ENCODE measurements at regions of chr10 and their contacts with region 1.

Region 1: GRCh38 chr10:95841661-95842498 is 65.9 kb upstream of the CC2D2B start:
- DNase-seq: peak; percentile 9
- H3K4me3 ChIP-seq: no peak overlapping the region
- CTCF ChIP-seq: peak; percentile 45

Region 2: GRCh38 chr10:95552679-95553342 is 289.1 kb before region 1 on chr10:
- CTCF ChIA-PET with region 1: no interaction called
- POLR2A ChIA-PET with region 1: no interaction called
- DNase-seq: no peak
- H3K4me3 ChIP-seq: no peak overlapping the region
- CTCF ChIP-seq: no peak

Region 3: GRCh38 chr10:95688648-95689047 is 153.2 kb before region 1 on chr10:
- CTCF ChIA-PET with region 1: interaction called, 495 read pairs
- POLR2A ChIA-PET with region 1: interaction called, 4 read pairs
- DNase-seq: no peak
- H3K4me3 ChIP-seq: no peak overlapping the region
- CTCF ChIP-seq: no peak

Region 4: GRCh38 chr10:95706986-95707385 is 134.9 kb before region 1 on chr10:
- CTCF ChIA-PET with region 1: interaction called, 19 read pairs
- POLR2A ChIA-PET with region 1: no interaction called
- DNase-seq: no peak
- H3K4me3 ChIP-seq: no peak overlapping the region
- CTCF ChIP-seq: no peak

Region 5: GRCh38 chr10:95770084-95770720 is 71.7 kb before region 1 on chr10:
- CTCF ChIA-PET with region 1: no interaction called
- POLR2A ChIA-PET with region 1: no interaction called
- DNase-seq: no peak
- H3K4me3 ChIP-seq: no peak overlapping the region
- CTCF ChIP-seq: no peak

Region 6: DNA sequence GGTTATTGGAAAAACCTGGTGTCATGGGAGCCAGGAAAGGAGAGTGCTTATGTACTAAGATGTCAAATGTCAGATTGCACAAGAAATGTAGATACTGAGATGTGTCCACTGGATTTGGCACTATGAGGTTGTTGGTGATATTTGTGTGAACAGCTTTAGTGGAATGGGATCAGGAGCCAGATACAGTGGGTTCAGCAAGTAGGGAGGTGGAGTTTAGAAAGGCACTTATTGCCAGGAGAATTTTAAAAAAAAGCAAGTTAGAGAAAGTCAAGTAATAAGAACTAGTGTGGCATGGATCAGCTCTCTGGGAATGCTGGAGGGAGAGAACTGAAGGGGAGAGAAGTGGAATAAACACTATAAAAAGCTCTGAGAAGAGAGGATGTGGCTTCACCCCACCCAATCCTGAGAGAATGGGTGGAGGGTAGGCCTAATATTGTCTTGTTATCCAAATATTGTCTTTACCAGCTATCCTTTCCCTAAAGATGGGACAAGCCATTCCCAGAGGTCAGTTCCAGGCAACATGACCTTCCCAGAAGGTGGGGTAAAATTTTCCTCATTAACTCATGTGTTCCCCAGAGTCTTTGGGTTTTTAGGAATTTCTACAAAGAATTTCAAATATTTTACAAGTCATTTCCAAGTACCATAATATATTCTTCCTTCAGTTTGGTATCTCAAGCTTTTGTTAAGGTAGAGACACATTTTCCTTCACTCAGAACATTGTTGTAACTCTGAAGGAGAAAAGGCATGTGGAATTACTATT is 43.6 kb before region 1 on chr10:
- CTCF ChIA-PET with region 1: interaction called, 11 read pairs
- POLR2A ChIA-PET with region 1: no interaction called
- DNase-seq: no peak
- H3K4me3 ChIP-seq: no peak overlapping the region
- CTCF ChIP-seq: no peak

Region 7: GRCh38 chr10:95818668-95819067 is 23.2 kb before region 1 on chr10:
- CTCF ChIA-PET with region 1: interaction called, 27 read pairs
- POLR2A ChIA-PET with region 1: no interaction called
- DNase-seq: peak; percentile 55
- H3K4me3 ChIP-seq: no peak overlapping the region
- CTCF ChIP-seq: no peak

Region 8: DNA sequence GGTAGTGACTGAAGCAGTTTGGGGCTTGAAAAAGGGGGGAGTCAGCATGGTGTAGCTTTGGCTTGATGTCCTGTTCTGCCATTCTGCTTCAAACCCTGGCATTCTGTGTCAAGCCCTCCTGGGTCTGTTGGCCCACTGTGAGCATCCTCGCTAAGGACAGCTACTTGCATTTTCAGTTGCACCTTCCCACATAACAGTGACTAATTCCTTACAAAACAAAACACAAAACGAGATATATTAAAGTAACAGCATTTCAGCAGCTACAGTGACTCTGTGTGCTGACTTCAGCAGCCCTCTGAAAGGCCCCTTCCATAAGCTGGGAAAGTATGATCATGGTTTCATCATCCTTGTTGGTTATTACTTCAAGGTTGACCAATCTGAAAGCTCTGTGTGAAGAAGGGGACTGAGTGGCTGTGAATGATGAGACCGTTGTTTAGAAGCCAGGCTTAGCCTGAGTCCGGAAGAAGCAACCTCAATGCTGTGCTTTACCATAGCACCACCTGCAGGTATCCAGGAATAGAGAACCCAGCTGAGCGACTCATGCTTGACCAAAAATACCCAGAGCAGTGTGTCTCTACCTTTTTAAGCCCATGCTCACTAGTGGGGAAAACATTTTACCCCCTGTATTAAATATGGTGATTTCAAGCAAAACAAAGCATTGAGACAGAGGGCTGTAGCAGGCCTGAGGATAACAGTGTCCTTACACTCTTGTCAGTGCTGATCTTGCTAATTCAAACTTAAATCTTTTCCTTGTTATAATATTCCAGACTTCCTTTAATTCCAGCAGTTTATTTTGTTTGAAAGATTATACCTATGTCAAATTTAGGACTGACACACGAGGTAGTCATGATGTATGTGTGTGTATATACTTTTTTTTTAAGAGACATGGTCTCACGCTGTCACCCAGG is 23.3 kb after region 1 on chr10:
- CTCF ChIA-PET with region 1: interaction called, 48 read pairs
- POLR2A ChIA-PET with region 1: no interaction called
- DNase-seq: peak; percentile 33
- H3K4me3 ChIP-seq: no peak overlapping the region
- CTCF ChIP-seq: peak; percentile 71

Region 9: GRCh38 chr10:95873651-95874050 is 31.8 kb after region 1 on chr10:
- CTCF ChIA-PET with region 1: interaction called, 16 read pairs
- POLR2A ChIA-PET with region 1: no interaction called
- DNase-seq: no peak
- H3K4me3 ChIP-seq: no peak overlapping the region
- CTCF ChIP-seq: no peak

Region 10: DNA sequence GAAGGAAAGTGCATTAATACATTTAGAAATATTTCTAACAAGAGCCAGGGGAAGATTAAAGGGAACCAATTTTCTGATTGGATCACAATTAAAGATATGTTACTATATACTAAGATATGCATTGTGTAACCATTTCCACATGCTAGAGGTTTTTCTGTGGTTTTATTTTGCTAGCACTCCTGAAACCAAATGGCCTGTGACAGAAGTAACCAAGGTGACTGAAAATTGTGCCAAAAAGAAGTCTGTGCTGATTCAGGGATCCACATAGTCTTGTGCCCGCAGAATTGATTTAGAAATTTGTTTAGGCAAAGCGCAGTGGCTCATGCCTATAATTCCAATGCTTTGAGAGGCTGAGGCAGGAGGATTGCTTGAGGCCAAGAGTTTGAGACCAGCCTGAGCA is 67.7 kb after region 1 on chr10:
- CTCF ChIA-PET with region 1: no interaction called
- POLR2A ChIA-PET with region 1: no interaction called
- DNase-seq: no peak
- H3K4me3 ChIP-seq: no peak overlapping the region
- CTCF ChIP-seq: no peak

Measured in AG04449 (cell line).